ENCODE measurements at regions of chr11 and their contacts with region 1.

Region 1: DNA sequence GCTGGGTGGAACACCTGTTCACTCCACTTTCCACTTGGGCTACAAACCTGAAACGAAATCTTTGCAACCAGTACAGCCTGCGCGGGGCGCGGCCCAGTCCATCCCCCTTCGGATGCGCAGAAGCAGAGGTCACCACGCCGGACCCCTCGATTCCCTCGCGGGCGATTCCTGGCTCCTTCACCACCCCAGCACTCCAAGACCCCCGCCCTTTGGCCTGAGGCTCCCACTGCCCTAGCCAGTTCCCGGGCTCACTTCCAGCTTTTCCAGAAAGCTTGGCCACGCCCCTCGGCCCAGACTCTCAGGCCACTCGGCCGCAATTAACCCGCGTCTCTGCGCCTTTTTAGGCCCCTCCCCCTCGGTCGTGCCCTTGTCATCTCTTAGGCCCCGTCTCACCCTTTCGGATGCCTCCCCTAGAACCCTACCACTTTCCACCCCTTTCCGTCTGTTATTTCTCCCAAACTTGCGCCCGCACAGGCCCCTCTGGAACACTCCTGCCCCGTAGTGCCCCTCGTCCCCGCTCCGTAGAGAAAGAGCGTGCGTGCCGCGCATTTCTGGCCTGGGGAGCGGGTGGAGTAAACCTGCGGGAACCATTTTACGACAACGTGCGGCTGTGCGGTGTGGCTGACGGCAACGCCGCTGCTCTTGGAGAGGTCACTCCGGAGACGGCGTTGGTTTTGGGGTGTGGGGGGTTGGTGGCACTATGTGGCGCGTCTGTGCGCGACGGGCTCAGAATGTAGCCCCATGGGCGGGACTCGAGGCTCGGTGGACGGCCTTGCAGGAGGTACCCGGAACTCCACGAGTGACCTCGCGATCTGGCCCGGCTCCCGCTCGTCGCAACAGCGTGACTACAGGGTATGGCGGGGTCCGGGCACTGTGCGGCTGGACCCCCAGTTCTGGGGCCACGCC is at the start of gene DLAT:
- DNase-seq: peak; percentile 90
- ATAC-seq: peak; percentile 83
- H3K4me3 ChIP-seq: peak within 1 kb of the TSS; percentile 76 to 100 (median 98)
- H3K4me3 Mint-ChIP-seq: peak within 1 kb of the TSS; percentile 100
- H3K27ac ChIP-seq: peak within 1 kb of the TSS; percentile 75 to 83
- H3K27ac Mint-ChIP-seq: peak within 1 kb of the TSS; percentile 98
- H3K4me1 ChIP-seq: peaks cover 18 to 20% of the 10 kb centered on the region in 2 donors
- H3K4me1 Mint-ChIP-seq: peaks cover 29% of the 10 kb centered on the region
- H3K27me3 ChIP-seq: no peaks in the 10 kb centered on the region
- H3K27me3 Mint-ChIP-seq: no peaks in the 10 kb centered on the region
- CTCF ChIP-seq: no peak
- total RNA-seq, gene DLAT: 19.8 and 21.1 TPM in 2 replicates

Region 2: DNA sequence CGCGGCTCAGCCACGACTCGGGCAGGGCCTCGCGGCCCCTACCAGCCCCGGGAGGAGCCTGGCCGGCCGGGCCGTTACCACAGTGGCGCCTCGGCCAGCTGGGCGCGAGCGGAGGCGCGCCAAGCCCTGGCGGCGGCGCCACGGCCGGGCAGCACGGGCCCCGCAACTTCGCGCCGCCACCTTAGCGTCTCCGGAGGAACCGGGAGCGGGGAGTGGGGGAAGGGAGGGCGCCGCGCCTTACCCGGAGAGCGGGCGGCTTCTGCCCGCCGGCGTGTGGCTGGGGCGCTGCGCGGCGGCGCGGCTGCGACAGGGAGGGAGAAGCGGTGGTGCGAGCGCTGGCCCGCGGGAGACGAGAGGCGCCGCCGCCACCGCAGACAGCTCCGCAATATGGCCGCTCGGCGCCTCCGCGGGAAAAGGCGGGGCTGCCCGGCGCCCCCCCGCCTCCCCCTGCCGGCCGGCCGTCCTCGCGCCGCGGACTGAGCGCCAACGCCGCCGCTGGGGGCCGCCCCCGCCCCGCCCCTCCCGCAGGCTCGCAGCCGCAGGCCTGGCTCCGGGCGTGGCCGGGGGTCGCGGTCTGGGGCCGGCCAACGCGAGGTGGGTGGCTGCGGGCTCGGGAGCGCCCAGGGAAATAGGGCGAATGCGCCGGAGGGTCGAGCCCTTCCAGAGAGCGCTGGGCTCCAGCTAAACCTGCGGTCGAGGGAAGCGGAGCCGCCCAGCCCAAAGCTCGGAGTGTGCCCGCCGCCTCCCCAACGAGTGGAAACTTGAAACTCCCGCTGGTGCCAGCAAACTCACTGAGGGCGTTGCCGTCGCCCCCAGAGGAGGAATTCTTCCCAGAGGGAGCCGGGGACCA is 1728.6 kb before region 1 on chr11 and contains the start of gene RDX:
- CTCF ChIA-PET with region 1: no interaction called
- POLR2A ChIA-PET with region 1: no interaction called
- intact Hi-C with region 1: loop called (anchors 10 kb)
- DNase-seq: peak; percentile 83
- ATAC-seq: peak; percentile 84
- H3K4me3 ChIP-seq: peak within 1 kb of the TSS; percentile 50 to 93 (median 86)
- H3K4me3 Mint-ChIP-seq: peak within 1 kb of the TSS; percentile 94
- H3K27ac ChIP-seq: peak within 1 kb of the TSS; percentile 18 to 70
- H3K27ac Mint-ChIP-seq: peak within 1 kb of the TSS; percentile 80
- H3K4me1 ChIP-seq: peaks cover 8 to 12% of the 10 kb centered on the region in 2 donors
- H3K4me1 Mint-ChIP-seq: peaks cover 24% of the 10 kb centered on the region
- H3K27me3 ChIP-seq: peaks cover 0 to 3% (median 0%) of the 10 kb centered on the region in 4 experiments
- H3K27me3 Mint-ChIP-seq: no peaks in the 10 kb centered on the region
- CTCF ChIP-seq: no peak
- total RNA-seq, gene RDX: 34.8 and 39.2 TPM in 2 replicates

Region 3: GRCh38 chr11:111982019-111982464 is 43.0 kb before region 1 on chr11:
- CTCF ChIA-PET with region 1: interaction called, 3 read pairs
- POLR2A ChIA-PET with region 1: no interaction called
- intact Hi-C with region 1: loop called (anchors 10 kb)
- DNase-seq: peak; percentile 47
- ATAC-seq: peak; percentile 47
- H3K4me3 ChIP-seq: no peak overlapping the region
- H3K4me3 Mint-ChIP-seq: no peak overlapping the region
- H3K27ac ChIP-seq: no peak overlapping the region
- H3K27ac Mint-ChIP-seq: no peak overlapping the region
- H3K4me1 ChIP-seq: peaks cover 8 to 9% of the 10 kb centered on the region in 2 donors
- H3K4me1 Mint-ChIP-seq: peaks cover 7% of the 10 kb centered on the region
- H3K27me3 ChIP-seq: peaks cover 0 to 33% (median 26%) of the 10 kb centered on the region in 4 experiments
- H3K27me3 Mint-ChIP-seq: peaks cover 35% of the 10 kb centered on the region
- CTCF ChIP-seq: peak; percentile 61

Region 4: GRCh38 chr11:112037527-112037926 is 12.5 kb after region 1 on chr11:
- CTCF ChIA-PET with region 1: no interaction called
- POLR2A ChIA-PET with region 1: no interaction called
- intact Hi-C with region 1: no loop called
- DNase-seq: no peak
- ATAC-seq: no peak
- H3K4me3 ChIP-seq: no peak overlapping the region
- H3K4me3 Mint-ChIP-seq: no peak overlapping the region
- H3K27ac ChIP-seq: no peak overlapping the region
- H3K27ac Mint-ChIP-seq: no peak overlapping the region
- H3K4me1 ChIP-seq: no peaks in the 10 kb centered on the region
- H3K4me1 Mint-ChIP-seq: no peaks in the 10 kb centered on the region
- H3K27me3 ChIP-seq: no peaks in the 10 kb centered on the region
- H3K27me3 Mint-ChIP-seq: no peaks in the 10 kb centered on the region
- CTCF ChIP-seq: no peak

Region 5: GRCh38 chr11:112074026-112074811 is 49.2 kb after region 1 on chr11 and contains the start of gene NKAPD1:
- CTCF ChIA-PET with region 1: no interaction called
- POLR2A ChIA-PET with region 1: no interaction called
- intact Hi-C with region 1: loop called (anchors 1 kb)
- DNase-seq: peak; percentile 95
- ATAC-seq: peak; percentile 85
- H3K4me3 ChIP-seq: peak within 1 kb of the TSS; percentile 78 to 98 (median 81)
- H3K4me3 Mint-ChIP-seq: peak within 1 kb of the TSS; percentile 97
- H3K27ac ChIP-seq: peak within 1 kb of the TSS; percentile 53 to 88
- H3K27ac Mint-ChIP-seq: peak within 1 kb of the TSS; percentile 97
- H3K4me1 ChIP-seq: peaks cover 12 to 13% of the 10 kb centered on the region in 2 donors
- H3K4me1 Mint-ChIP-seq: peaks cover 31% of the 10 kb centered on the region
- H3K27me3 ChIP-seq: no peaks in the 10 kb centered on the region
- H3K27me3 Mint-ChIP-seq: peaks cover 3% of the 10 kb centered on the region
- CTCF ChIP-seq: peak; percentile 23
- total RNA-seq, gene NKAPD1: 22.8 and 23.4 TPM in 2 replicates

Region 6: GRCh38 chr11:112086422-112087191 is 61.6 kb after region 1 on chr11 and contains the starts of genes SDHD and TIMM8B:
- CTCF ChIA-PET with region 1: no interaction called
- POLR2A ChIA-PET with region 1: no interaction called
- intact Hi-C with region 1: loop called (anchors 1 kb)
- DNase-seq: peak; percentile 98
- ATAC-seq: peak; percentile 89
- H3K4me3 ChIP-seq: peak within 1 kb of the TSS; percentile 73 to 100 (median 97)
- H3K4me3 Mint-ChIP-seq: peak within 1 kb of the TSS; percentile 89
- H3K27ac ChIP-seq: peak within 1 kb of the TSS; percentile 77 to 91
- H3K27ac Mint-ChIP-seq: peak within 1 kb of the TSS; percentile 93
- H3K4me1 ChIP-seq: peaks cover 18 to 21% of the 10 kb centered on the region in 2 donors
- H3K4me1 Mint-ChIP-seq: peaks cover 42% of the 10 kb centered on the region
- H3K27me3 ChIP-seq: no peaks in the 10 kb centered on the region
- H3K27me3 Mint-ChIP-seq: no peaks in the 10 kb centered on the region
- CTCF ChIP-seq: peak; percentile 26
- total RNA-seq, gene SDHD: 55.0 and 57.7 TPM in 2 replicates
- total RNA-seq, gene TIMM8B: 22.4 and 25.5 TPM in 2 replicates

Region 7: GRCh38 chr11:112226062-112226830 is 201.2 kb after region 1 on chr11 and contains the start of gene PTS:
- CTCF ChIA-PET with region 1: no interaction called
- POLR2A ChIA-PET with region 1: no interaction called
- intact Hi-C with region 1: loop called (anchors 2 kb)
- DNase-seq: peak; percentile 94
- ATAC-seq: peak; percentile 90
- H3K4me3 ChIP-seq: peak within 1 kb of the TSS; percentile 82 to 98 (median 92)
- H3K4me3 Mint-ChIP-seq: peak within 1 kb of the TSS; percentile 95
- H3K27ac ChIP-seq: peak within 1 kb of the TSS; percentile 99
- H3K27ac Mint-ChIP-seq: peak within 1 kb of the TSS; percentile 99
- H3K4me1 ChIP-seq: peaks cover 10 to 18% of the 10 kb centered on the region in 2 donors
- H3K4me1 Mint-ChIP-seq: peaks cover 23% of the 10 kb centered on the region
- H3K27me3 ChIP-seq: no peaks in the 10 kb centered on the region
- H3K27me3 Mint-ChIP-seq: no peaks in the 10 kb centered on the region
- CTCF ChIP-seq: no peak
- total RNA-seq, gene PTS: 36.2 and 36.7 TPM in 2 replicates

Region 8: DNA sequence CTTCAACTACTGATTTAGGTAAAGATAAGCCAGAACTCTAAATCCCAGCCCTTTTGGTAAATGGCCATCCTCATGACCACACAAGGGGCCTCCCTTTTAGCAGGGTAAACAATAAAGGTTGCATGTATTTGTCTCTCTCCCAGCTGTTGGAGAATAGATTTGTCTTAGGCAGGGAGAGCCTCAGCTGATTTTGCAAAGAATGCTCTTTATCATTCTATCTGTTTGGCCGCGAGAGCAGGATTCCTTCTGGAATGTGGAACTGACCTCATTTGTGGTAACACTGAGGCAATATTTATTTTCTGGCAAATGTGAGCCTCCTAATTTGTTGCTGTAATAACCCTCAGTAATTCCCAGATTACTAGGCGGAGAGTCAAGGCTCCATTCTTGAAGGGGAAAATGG is 216.5 kb after region 1 on chr11:
- CTCF ChIA-PET with region 1: no interaction called
- POLR2A ChIA-PET with region 1: no interaction called
- intact Hi-C with region 1: no loop called
- DNase-seq: no peak
- ATAC-seq: no peak
- H3K4me3 ChIP-seq: no peak overlapping the region
- H3K4me3 Mint-ChIP-seq: no peak overlapping the region
- H3K27ac ChIP-seq: no peak overlapping the region
- H3K27ac Mint-ChIP-seq: no peak overlapping the region
- H3K4me1 ChIP-seq: peaks cover 2 to 5% of the 10 kb centered on the region in 2 donors
- H3K4me1 Mint-ChIP-seq: peaks cover 4% of the 10 kb centered on the region
- H3K27me3 ChIP-seq: no peaks in the 10 kb centered on the region
- H3K27me3 Mint-ChIP-seq: no peaks in the 10 kb centered on the region
- CTCF ChIP-seq: no peak

Measured in B cell (primary cell).